Heart right ventricle (tissue), 16 donors: ENCODE measurements at regions of chr14 and their contacts with region 1.

Region 1: DNA sequence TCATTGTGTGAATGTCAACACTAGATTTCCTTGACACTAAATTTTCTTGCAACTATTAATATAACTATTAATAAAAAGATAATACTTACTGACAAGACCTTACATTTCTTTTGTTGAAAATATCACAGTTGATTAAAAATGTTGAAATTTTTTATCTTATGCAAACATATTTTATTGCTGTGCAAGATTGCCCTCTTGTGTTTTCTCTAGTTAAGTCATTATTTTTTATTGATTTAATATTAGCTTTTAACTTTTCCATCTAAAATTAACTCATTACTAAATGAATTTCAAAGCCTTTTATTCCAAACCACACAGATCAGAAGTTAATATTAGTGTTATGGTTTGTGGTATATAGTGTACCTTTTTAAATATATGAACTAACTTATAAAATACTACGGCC is 11.7 kb upstream of the NAA30 start:
- DNase-seq: no peak
- ATAC-seq: no peak
- H3K4me3 ChIP-seq: no peak overlapping the region
- H3K27ac ChIP-seq: no peak overlapping the region
- H3K4me1 ChIP-seq: peaks cover 0 to 7% (median 0%) of the 10 kb centered on the region in 9 donors
- H3K27me3 ChIP-seq: no peaks in the 10 kb centered on the region
- CTCF ChIP-seq: no peak

Region 2: DNA sequence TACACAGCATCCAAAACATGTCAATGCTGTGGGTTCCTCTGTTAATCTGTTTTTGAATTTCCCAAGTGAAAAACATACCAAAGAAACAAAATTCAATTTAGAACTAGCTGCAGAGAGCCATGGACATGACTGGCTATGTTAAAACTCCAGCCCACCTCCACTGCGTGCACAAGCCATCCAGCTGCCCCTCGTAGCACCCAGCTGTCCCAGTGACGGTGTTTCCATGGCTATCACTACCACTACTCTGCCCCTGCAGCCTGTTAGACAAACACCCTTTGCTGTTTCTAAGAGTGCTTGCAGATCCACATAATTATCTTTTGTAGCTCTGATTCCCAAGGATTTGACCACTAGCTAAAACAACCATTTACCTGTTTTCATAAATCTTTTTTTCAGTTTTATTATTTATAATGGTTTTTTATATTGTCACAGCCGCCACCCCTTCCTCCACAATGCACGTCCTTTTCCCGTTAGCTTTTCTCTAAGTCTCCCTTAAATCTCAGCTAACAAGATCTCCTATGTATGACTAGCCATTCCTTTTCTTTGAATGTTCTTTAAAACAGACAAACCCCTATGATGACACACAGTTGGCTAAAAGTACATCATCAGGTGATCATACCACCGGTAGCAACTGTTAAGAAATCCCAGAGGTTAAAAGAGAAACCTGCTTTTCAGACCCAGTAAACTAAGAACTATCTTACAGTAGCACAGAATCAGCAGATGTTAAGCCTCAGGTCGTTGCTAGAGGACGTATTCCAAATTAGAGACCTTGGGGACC is 26.1 kb before region 1 on chr14:
- intact Hi-C with region 1: loop called in 1 of 10 experiments (anchors 1 kb)
- DNase-seq: no peak
- ATAC-seq: no peak
- H3K4me3 ChIP-seq: no peak overlapping the region
- H3K27ac ChIP-seq: no peak overlapping the region
- H3K4me1 ChIP-seq: no peaks in the 10 kb centered on the region
- H3K27me3 ChIP-seq: peaks cover 0 to under 1% (median 0%) of the 10 kb centered on the region in 7 donors
- CTCF ChIP-seq: no peak